IMR-90 (cell line): ENCODE measurements at regions of chr4 and their contacts with region 1.

Region 1: GRCh38 chr4:73922766-73923630 is 53.8 kb downstream of the CXCL1 start:
- DNase-seq: peak; percentile 59
- ATAC-seq: no peak; the same call in 1 of the 2 replicates
- H3K4me3 ChIP-seq: no peak overlapping the region
- H3K27ac ChIP-seq: no peak overlapping the region
- H3K4me1 ChIP-seq: peaks cover 6% of the 10 kb centered on the region
- H3K27me3 ChIP-seq: peaks cover 8% of the 10 kb centered on the region
- CTCF ChIP-seq: peak; percentile 61
- POLR2A ChIP-seq: no peak
- RAD21 ChIP-seq: peak; percentile 76

Region 2: DNA sequence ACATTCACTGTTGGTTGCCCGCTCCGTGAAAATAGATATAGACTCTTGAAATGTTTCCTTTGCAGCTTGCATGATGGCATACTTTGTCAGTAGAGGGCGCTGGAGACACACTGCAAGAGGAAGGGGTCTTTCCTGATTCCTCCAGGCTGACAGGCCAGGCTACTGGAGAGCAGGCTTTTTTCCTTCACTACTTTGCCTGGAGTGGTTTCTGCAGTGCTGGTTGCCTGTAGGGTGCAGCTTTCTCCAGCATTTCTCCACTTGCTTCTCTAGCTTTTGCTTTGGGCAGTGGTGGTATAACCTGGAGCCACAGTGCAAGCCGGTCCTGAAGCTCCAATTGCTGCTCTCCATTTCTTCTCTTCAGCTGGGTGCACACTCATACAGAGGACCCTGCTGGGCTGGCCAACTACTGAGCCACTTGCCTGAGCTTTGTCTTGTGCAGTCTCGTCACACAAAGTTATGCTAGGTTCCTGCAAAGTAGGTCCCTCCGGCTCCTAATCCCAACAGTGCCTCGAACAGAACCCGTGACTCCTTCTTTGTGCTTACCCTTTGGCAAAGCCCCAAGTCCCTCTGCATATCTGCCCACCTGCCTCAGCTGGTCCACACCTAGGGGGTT is 349.1 kb before region 1 on chr4:
- CTCF ChIA-PET with region 1: interaction called, 3 read pairs
- POLR2A ChIA-PET with region 1: no interaction called
- dilution Hi-C with region 1: no loop called
- in situ Hi-C with region 1: no loop called
- intact Hi-C with region 1: loop called (anchors 1 kb)
- DNase-seq: peak; percentile 82
- ATAC-seq: peak; percentile 98
- H3K4me3 ChIP-seq: no peak overlapping the region
- H3K27ac ChIP-seq: no peak overlapping the region
- H3K4me1 ChIP-seq: no peaks in the 10 kb centered on the region
- H3K27me3 ChIP-seq: peaks cover 2% of the 10 kb centered on the region; the same call in 1 of the 2 replicates
- CTCF ChIP-seq: peak; percentile 88
- POLR2A ChIP-seq: no peak
- RAD21 ChIP-seq: peak; percentile 80

Region 3: GRCh38 chr4:73593631-73594241 is 329.3 kb before region 1 on chr4:
- CTCF ChIA-PET with region 1: no interaction called
- POLR2A ChIA-PET with region 1: no interaction called
- dilution Hi-C with region 1: no loop called
- in situ Hi-C with region 1: loop called (anchors 10 kb)
- intact Hi-C with region 1: loop called (anchors 2 kb)
- DNase-seq: peak; percentile 49
- ATAC-seq: 0 out of 2 replicates have a peak, but pooled peaks have one; percentile 43
- H3K4me3 ChIP-seq: no peak overlapping the region
- H3K27ac ChIP-seq: no peak overlapping the region
- H3K4me1 ChIP-seq: peaks cover 2% of the 10 kb centered on the region; the same call in 1 of the 2 replicates
- H3K27me3 ChIP-seq: no peaks in the 10 kb centered on the region
- CTCF ChIP-seq: peak; percentile 62
- POLR2A ChIP-seq: no peak
- RAD21 ChIP-seq: peak; percentile 53

Region 4: GRCh38 chr4:73662709-73663546 is 260.1 kb before region 1 on chr4:
- CTCF ChIA-PET with region 1: interaction called, 7 read pairs
- POLR2A ChIA-PET with region 1: no interaction called
- dilution Hi-C with region 1: no loop called
- in situ Hi-C with region 1: loop called (anchors 5 kb)
- intact Hi-C with region 1: loop called (anchors 1 kb)
- DNase-seq: peak; percentile 77
- ATAC-seq: peak; percentile 64
- H3K4me3 ChIP-seq: no peak overlapping the region
- H3K27ac ChIP-seq: no peak overlapping the region; the same call in 1 of the 2 replicates
- H3K4me1 ChIP-seq: peaks cover 6% of the 10 kb centered on the region
- H3K27me3 ChIP-seq: no peaks in the 10 kb centered on the region
- CTCF ChIP-seq: peak; percentile 72
- POLR2A ChIP-seq: no peak
- RAD21 ChIP-seq: peak; percentile 87